ENCODE measurements at regions of chr2 and their contacts with region 1.

Region 1: DNA sequence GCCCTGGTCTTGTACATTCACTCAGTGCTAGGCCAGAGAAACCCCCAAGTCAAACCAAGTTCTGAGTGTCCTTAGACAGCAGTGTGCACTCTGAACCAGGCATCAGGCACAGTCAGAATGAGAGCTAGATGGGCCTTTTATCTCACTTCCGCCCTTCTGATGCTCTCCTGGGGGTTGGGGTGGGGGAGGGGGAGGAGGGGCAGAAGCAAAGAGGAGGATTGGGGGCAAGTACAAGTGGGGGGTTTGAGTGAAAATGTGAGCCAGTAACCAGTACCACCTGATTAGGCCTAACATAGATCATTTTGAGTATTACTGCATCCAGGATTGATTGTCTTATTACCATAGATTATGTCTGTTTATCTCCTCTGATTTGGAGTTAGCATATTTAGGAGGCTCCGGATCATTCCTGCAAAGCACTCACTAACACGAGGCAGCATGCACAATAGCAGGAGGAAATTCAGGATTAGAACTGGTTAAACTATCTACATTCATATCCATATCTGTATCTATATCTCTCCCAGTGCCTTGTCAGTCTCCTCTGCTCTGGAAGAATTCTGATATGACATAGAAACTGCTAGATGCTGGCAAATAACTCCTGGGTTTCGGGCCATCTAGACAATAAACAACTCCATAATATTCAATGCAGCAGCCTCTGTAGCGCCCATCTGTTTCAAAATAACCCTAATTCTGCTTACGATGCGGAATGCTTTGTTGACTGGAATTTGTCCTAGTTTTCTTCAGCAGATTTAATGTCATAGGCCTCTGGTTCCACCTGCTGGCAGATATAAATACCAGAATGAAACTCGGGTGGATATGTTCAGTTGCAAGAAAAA is 149.1 kb downstream of the RHBDD1 start:
- DNase-seq: peak in 1 of 2 donors; percentile 70
- H3K4me3 ChIP-seq: no peak overlapping the region
- CTCF ChIP-seq: peak in 1 of 3 donors; percentile 38
- POLR2A ChIP-seq: no peak

Region 2: GRCh38 chr2:225670111-225670974 is 1314.6 kb before region 1 on chr2:
- intact Hi-C with region 1: loop called (anchors 5 kb)
- DNase-seq: no peak
- H3K4me3 ChIP-seq: no peak overlapping the region
- CTCF ChIP-seq: no peak
- POLR2A ChIP-seq: no peak

Region 3: GRCh38 chr2:225889446-225889850 is 1095.5 kb before region 1 on chr2:
- intact Hi-C with region 1: loop called (anchors 10 kb)
- DNase-seq: peak in 1 of 2 donors; percentile 28
- H3K4me3 ChIP-seq: no peak overlapping the region
- CTCF ChIP-seq: peak in 1 of 3 donors; percentile 57
- POLR2A ChIP-seq: no peak

Region 4: DNA sequence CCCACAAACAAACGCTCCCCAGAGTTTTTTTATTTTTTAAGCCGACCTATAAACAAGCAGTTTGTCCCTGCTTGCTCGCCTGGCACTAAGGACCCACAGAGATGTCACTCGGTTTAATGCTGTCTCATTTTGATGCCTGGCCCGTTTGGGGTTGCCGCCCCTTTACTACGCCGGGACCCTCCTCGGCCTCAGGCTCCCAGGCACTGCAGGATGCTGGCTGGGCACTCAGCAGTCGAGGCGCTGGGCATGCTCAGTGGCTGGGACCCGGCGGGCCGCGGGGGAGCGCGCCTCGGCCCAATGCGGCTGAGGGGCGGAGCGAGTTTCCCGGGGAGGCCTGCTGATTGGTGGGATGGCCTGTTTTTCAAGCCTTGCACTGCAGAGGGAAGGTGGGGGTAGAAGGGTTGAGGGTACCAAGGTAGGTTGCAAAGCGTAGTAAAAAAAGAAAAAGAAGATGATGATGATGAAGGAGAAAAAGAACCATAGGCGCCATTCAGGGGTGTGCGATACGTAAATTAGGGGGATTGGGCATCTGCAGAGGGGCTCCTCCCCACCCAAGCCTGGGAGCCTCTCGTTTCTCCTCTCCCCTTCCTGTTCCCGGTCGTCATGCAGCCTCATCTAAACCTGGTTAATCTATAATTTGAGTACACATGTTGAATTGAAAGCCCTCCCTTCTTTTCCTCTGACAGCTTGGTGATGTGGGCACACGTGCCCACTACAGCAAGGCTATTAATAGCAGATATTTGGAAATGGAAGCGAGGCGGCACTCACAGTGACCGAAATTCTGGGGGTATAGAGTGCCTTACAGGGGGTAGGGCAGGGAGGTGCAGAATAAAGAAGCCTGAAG is 183.8 kb before region 1 on chr2:
- intact Hi-C with region 1: loop called (anchors 10 kb)
- DNase-seq: peak; percentile 46 to 94
- H3K4me3 ChIP-seq: no peak overlapping the region
- CTCF ChIP-seq: no peak
- POLR2A ChIP-seq: no peak